HEK293 (cell line): ENCODE measurements at regions of chr5 and their contacts with region 1.

Region 1: DNA sequence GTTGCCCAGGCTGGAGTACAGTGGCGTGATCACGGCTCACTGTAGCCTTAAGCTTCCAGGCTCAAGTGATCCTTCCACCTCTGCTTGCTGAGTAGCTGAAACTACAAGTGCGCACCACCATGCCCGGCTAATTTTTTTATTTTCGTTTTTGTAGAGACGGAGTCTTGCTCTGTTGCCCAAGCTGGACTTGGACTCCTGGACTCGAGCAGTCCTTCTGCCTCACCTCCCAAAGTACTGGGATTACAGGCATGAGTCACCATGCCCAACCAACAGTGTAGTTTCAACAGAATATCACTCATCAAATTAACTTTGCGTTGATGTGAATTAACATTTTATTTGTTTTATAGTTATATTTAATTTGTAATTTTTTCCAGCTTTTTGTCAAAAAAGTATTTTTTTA is 45.3 kb downstream of the WDR70 start:
- H3K4me3 ChIP-seq: no peak overlapping the region
- H3K27ac ChIP-seq: no peak overlapping the region
- H3K4me1 ChIP-seq: no peaks in the 10 kb centered on the region
- CTCF ChIP-seq: no peak

Region 2: DNA sequence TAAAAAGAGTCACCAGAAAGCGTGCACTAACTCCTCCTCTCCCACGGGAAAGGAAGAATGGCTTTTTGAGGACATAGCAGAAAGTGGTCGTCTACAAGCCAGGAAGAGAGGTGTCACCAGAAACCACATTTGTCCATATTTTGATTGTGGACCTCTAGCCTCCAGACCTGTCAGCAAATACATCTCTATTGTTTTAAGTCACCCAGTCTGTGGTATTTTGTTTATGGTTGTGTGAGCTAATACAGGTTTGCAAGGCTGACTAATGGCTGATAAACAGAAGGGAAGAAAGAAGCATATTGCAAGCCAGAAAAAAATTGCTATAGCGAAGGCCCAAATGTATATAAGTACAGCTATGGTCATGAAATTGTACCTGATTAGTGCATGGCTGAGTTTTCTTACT is 23.9 kb before region 1 on chr5:
- CTCF ChIA-PET with region 1: interaction called, 10 read pairs
- POLR2A ChIA-PET with region 1: no interaction called
- H3K4me3 ChIP-seq: no peak overlapping the region
- H3K27ac ChIP-seq: no peak overlapping the region
- H3K4me1 ChIP-seq: no peaks in the 10 kb centered on the region
- CTCF ChIP-seq: no peak

Region 3: GRCh38 chr5:37757980-37758583 is 333.6 kb after region 1 on chr5:
- CTCF ChIA-PET with region 1: no interaction called
- POLR2A ChIA-PET with region 1: no interaction called
- H3K4me3 ChIP-seq: no peak overlapping the region
- H3K27ac ChIP-seq: no peak overlapping the region
- H3K4me1 ChIP-seq: no peaks in the 10 kb centered on the region
- CTCF ChIP-seq: no peak